ENCODE measurements at regions of chr19 and their contacts with region 1.

Region 1: GRCh38 chr19:12666265-12667048 is at the starts of genes MAN2B1 and WDR83:
- DNase-seq: peak; percentile 25 to 89
- H3K4me3 ChIP-seq: peak within 1 kb of the TSS; percentile 71 to 81
- H3K27ac ChIP-seq: peak within 1 kb of the TSS; percentile 58 to 80
- H3K4me1 ChIP-seq: peaks cover 12 to 33% of the 10 kb centered on the region in 2 donors
- H3K27me3 ChIP-seq: no peaks in the 10 kb centered on the region
- CTCF ChIP-seq: no peak
- total RNA-seq, gene MAN2B1: 36.3 TPM
- total RNA-seq, gene WDR83: 12.0 TPM

Region 2: GRCh38 chr19:11535792-11536595 is 1130.5 kb before region 1 on chr19:
- intact Hi-C with region 1: loop called (anchors 5 kb)
- DNase-seq: peak; percentile 78 to 96
- H3K4me3 ChIP-seq: peak overlapping the region; percentile 37 to 55
- H3K27ac ChIP-seq: peak overlapping the region; percentile 95 to 97
- H3K4me1 ChIP-seq: peaks cover 7 to 20% of the 10 kb centered on the region in 2 donors
- H3K27me3 ChIP-seq: no peaks in the 10 kb centered on the region
- CTCF ChIP-seq: peak; percentile 91 to 98 (median 93)

Region 3: GRCh38 chr19:12052497-12053169 is 613.8 kb before region 1 on chr19 and contains the start of gene ZNF878:
- intact Hi-C with region 1: loop called (anchors 10 kb)
- DNase-seq: peak; percentile 63 to 93
- H3K4me3 ChIP-seq: peak within 1 kb of the TSS; percentile 77 to 83
- H3K27ac ChIP-seq: peak within 1 kb of the TSS; percentile 59 to 65
- H3K4me1 ChIP-seq: peaks cover 0 to 2% of the 10 kb centered on the region in 2 donors
- H3K27me3 ChIP-seq: no peaks in the 10 kb centered on the region
- CTCF ChIP-seq: peak in 2 of 3 experiments; percentile 7 to 11
- total RNA-seq, gene ZNF878: not detected

Region 4: DNA sequence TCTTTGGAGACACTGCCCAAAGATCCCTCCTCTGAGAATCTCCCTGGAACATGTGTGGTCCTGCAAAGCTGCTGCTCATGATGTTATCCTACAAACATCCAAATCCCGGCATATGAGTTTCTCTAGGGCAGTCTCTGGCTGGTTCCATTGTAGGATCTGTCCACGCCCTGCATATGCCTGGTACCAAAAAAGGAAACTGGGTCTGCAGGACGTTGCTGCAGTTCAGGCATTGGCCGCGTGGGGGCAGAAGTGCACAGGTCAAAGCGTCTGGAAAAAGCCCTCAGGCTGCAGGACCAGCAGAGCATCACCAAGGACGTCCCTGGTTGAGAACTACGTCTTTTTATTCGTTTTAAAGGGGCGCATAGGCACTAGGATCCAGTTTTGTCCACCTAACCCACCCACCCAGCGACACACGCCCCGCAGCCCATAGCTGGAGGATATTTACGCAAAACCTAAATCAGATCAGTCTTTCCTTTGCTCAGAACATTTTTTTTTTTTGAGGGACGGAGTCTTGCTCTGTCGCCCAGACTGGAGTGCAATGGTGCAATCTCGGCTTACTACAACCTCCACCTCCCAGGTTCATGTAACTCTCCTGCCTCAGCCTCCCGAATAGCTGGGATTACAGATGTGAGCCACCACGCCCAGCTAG is 102.3 kb before region 1 on chr19:
- intact Hi-C with region 1: loop called (anchors 5 kb)
- DNase-seq: peak; percentile 35 to 94
- H3K4me3 ChIP-seq: no peak overlapping the region
- H3K27ac ChIP-seq: no peak overlapping the region
- H3K4me1 ChIP-seq: peaks cover 0 to 6% of the 10 kb centered on the region in 2 donors
- H3K27me3 ChIP-seq: no peaks in the 10 kb centered on the region
- CTCF ChIP-seq: peak; percentile 84 to 93 (median 87)

Region 5: GRCh38 chr19:12610540-12611360 is 55.7 kb before region 1 on chr19 and contains the starts of genes ZNF490 and ZNF791:
- intact Hi-C with region 1: loop called (anchors 2 kb)
- DNase-seq: peak; percentile 95 to 99
- H3K4me3 ChIP-seq: peak within 1 kb of the TSS; percentile 74 to 81
- H3K27ac ChIP-seq: peak within 1 kb of the TSS; percentile 96 to 100
- H3K4me1 ChIP-seq: peaks cover 0 to 28% of the 10 kb centered on the region in 2 donors
- H3K27me3 ChIP-seq: no peaks in the 10 kb centered on the region
- CTCF ChIP-seq: no peak
- total RNA-seq, gene ZNF490: 27.8 TPM
- total RNA-seq, gene ZNF791: 6.9 TPM

Region 6: DNA sequence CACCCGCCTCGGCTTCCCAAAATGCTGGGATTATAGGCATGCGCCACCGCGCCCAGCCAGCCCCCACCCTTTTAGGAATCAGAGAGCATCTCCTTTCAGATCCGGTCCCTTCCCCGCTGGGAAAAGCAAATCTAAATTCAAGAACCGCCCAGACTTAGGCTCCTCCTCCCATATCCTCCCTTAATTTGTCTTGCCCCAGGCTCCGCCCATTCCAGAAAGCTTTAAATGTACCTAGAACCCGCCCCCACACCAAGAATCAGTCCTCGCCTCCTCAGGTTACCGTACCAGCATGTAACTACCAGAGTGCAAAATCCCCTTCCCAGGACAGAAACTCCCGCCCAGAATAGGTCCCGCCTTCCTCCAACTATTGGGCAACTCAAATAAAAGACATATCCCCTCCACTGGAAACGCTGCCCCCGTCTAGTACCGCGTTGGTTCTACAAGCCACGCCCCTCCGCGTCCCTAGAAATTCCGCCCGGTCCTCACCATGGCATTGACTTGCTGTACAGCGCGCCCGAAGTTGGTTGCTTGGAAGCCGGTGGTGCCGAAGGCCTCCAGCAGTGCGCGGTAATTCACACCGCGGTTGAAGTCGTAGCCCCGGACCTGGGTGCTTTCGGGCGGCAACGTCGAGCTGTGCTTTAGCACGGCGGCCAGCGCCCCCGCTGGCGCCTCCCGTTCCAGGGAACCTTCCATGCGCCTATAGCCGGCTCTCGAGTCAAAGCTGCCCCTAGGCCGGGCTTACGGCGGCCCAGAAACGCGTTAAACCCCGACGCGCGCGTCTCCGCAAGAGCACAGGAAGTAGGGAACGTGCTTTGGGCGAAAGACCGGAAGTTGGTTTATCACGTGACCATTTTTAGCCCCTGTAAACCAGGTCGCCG is 14.9 kb after region 1 on chr19 and contains the start of gene DHPS:
- intact Hi-C with region 1: loop called (anchors 1 kb)
- DNase-seq: peak; percentile 54 to 97
- H3K4me3 ChIP-seq: peak within 1 kb of the TSS; percentile 82 to 99
- H3K27ac ChIP-seq: peak within 1 kb of the TSS; percentile 93 to 98
- H3K4me1 ChIP-seq: peaks cover 0 to 9% of the 10 kb centered on the region in 2 donors
- H3K27me3 ChIP-seq: no peaks in the 10 kb centered on the region
- CTCF ChIP-seq: no peak
- total RNA-seq, gene DHPS: 160 TPM

Measured in ascending aorta (tissue), 2 donors.